Activated B cell treated with CpG ODN at 0.5 μM for 24 hours (primary cell): ENCODE measurements at regions of chr15 and their contacts with region 1.

Region 1: DNA sequence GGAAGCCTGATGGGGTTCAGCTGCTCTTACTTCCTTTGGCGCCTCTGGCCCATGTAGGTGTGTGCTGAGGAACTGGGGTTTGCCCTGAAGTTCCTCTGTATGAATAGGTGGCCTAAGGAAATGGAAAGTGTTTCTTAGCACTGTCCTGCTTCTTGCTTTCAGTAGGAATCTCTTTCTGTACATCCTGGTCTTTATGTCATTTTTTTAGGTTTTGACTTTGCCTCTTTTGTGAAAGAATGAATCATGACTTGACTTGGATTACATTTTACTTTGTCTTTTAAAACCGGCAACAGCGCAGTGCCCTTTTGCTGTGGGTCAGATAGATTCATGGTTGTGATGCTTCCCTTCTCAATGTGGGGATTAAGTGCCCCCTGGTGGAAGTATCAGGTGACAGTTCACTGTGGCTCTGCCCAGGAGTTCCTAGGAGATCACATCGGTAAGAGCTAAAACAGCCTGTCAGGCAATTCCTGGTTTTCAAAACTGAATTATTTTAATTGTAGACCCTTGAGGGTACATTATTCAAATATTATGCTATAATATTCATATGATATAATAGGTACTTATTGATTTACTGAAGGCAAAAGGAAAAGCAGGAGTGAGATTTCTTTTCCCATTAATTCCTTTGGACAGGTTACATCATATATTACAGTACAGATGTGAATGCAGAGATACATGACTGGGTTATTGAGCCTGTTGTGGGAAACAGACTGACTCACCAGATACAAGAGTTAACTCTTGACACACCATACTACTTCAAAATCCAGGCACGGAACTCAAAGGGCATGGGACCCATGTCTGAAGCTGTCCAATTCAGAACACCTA is 95.4 kb downstream of the HCN4 start:
- DNase-seq: no peak
- ATAC-seq: peak; percentile 60
- H3K4me3 Mint-ChIP-seq: no peak overlapping the region
- H3K27ac Mint-ChIP-seq: no peak overlapping the region
- H3K4me1 Mint-ChIP-seq: peaks cover 4% of the 10 kb centered on the region
- H3K27me3 Mint-ChIP-seq: no peaks in the 10 kb centered on the region
- CTCF ChIP-seq: peak; percentile 19

Region 2: DNA sequence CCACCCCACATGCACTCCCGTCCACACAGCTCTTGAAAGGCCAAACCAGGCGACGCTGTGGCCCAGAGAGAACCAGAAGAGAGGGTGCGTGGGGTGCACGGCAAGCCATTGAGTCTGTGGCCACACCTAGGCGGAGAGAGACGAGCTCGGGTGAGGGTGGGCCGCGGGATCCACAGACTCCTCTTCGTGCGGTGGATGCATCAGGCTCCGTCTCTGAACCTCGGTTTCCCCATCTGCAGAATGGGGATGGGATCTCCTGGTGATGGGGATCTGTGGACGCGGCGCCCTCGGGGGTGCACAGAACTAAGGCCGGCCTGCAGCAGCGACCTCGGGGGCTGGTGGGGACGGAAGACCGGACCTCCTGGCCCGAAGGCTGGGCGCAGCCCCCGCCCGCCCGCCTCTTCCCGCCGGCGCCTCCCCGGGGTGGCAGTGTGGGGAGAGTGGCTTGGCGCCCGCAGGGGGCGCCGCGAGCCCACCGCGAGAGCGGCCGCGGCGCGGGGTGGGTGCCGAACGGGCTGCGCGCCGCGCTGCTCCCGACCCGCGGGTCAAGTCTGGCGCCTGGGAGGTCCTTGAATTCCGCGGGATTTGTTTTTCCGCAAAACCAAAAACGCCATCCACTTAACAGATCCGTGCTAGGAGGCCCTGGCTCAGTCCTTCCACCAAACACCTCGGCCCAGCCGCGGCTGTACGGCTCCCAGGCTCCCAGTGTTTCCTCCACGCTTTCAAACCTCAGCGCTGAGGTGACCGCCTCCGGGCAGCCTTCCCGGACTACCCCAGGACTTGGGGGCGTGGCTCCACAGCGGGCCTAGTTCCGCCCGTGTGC is 476.7 kb before region 1 on chr15:
- CTCF ChIA-PET with region 1: no interaction called
- POLR2A ChIA-PET with region 1: no interaction called
- intact Hi-C with region 1: loop called (anchors 5 kb)
- DNase-seq: peak; percentile 48
- ATAC-seq: peak; percentile 86
- H3K4me3 Mint-ChIP-seq: peak overlapping the region; percentile 81
- H3K27ac Mint-ChIP-seq: no peak overlapping the region
- H3K4me1 Mint-ChIP-seq: peaks cover 15% of the 10 kb centered on the region
- H3K27me3 Mint-ChIP-seq: peaks cover 46% of the 10 kb centered on the region
- CTCF ChIP-seq: no peak